CD8-positive, alpha-beta T cell (primary cell): ENCODE measurements at regions of chr11 and their contacts with region 1.

Region 1: DNA sequence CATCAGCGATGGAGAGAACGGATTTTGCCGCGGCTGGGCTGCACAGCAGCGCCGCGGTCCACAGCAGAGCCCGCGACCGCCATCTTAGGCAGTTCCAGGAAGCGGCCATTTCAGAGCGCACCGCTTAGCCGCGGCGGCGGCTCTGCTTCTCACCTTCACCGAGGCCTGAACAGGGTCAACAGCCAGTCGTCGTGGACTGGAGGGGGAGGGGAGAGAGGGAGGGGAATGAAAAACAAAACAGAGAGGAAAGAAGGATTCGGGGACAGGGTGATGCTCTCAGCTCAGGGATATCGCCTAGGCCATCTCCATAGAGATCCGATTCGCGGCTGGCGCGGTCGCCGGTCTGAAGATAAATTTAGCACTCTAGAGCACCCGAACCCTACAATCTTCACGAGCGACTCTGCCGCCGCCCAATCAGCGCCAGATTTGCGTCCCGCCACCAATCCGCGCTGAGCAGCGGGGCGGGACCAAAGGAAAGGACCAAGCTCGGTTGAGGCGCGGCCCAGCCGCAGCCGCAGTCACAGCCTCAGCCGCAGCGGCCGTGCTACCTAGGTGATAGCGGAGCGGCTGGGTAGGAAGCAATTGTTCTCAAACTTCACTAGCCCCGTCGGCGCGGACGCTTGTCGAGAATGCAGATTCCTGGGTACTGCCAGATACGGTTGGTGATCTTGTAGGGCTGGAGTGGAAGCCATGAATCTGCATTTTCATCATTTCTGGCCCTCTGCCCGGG is at the start of gene ZBED5:
- DNase-seq: peak; percentile 91 to 98 (median 94)
- ATAC-seq: peak; percentile 90
- H3K4me3 ChIP-seq: peak within 1 kb of the TSS; percentile 68 to 93
- H3K4me3 Mint-ChIP-seq: peak within 1 kb of the TSS; percentile 98
- H3K27ac ChIP-seq: peak within 1 kb of the TSS; percentile 91 to 92
- H3K27ac Mint-ChIP-seq: peak within 1 kb of the TSS; percentile 99
- H3K4me1 ChIP-seq: peaks cover 23% of the 10 kb centered on the region
- H3K4me1 Mint-ChIP-seq: peaks cover 51% of the 10 kb centered on the region
- H3K27me3 ChIP-seq: no peaks in the 10 kb centered on the region
- H3K27me3 Mint-ChIP-seq: no peaks in the 10 kb centered on the region
- CTCF ChIP-seq: no peak
- total RNA-seq, gene ZBED5: 57.5 to 59.2 TPM

Region 2: GRCh38 chr11:10236850-10237249 is 621.0 kb before region 1 on chr11:
- CTCF ChIA-PET with region 1: no interaction called
- POLR2A ChIA-PET with region 1: no interaction called
- intact Hi-C with region 1: no loop called
- DNase-seq: no peak
- ATAC-seq: no peak
- H3K4me3 ChIP-seq: no peak overlapping the region
- H3K4me3 Mint-ChIP-seq: no peak overlapping the region
- H3K27ac ChIP-seq: no peak overlapping the region
- H3K27ac Mint-ChIP-seq: no peak overlapping the region
- H3K4me1 ChIP-seq: no peaks in the 10 kb centered on the region
- H3K4me1 Mint-ChIP-seq: peaks cover 2% of the 10 kb centered on the region
- H3K27me3 ChIP-seq: no peaks in the 10 kb centered on the region
- H3K27me3 Mint-ChIP-seq: no peaks in the 10 kb centered on the region
- CTCF ChIP-seq: no peak

Region 3: DNA sequence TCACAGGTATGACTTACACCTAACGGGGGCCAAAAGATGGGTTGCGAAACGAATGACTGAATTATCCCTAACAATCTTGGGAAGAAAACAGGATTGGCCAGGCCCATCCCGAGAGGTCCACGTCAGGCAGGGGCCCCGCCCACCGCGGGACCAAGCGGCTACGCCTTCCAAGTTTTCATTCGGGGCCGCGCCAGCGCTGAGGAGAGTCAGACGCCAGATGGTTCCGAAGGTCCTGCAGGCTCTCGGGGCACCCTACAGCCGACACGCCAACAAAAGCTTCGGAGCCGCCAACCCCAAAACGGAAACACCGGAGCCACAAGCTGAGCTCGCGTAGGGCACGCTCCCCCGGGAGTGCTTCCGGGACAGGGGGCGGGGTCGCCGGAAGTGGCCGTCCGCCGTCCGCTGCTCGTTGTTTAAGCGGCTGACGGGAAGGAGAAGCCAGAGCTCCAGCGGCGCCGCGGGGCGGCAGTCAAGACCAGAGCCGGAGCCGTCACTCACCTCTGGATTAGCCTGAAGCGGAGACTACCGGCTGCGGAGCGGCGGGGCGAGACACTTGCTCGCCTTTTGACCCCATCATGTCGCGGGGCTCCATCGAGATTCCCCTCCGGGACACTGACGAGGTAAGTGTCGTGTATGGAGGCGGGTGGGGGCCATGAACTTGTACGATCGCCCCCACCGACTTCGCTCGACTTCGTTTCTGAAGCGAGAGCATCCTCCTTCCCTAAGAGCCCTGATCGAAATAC is 106.9 kb before region 1 on chr11 and contains the start of gene CTR9:
- CTCF ChIA-PET with region 1: no interaction called
- POLR2A ChIA-PET with region 1: interaction called, 11 read pairs
- intact Hi-C with region 1: loop called (anchors 1 to 5 kb)
- DNase-seq: peak; percentile 77 to 95 (median 90)
- ATAC-seq: peak; percentile 85
- H3K4me3 ChIP-seq: peak within 1 kb of the TSS; percentile 93 to 98
- H3K4me3 Mint-ChIP-seq: peak within 1 kb of the TSS; percentile 97
- H3K27ac ChIP-seq: peak within 1 kb of the TSS; percentile 66 to 81
- H3K27ac Mint-ChIP-seq: peak within 1 kb of the TSS; percentile 94
- H3K4me1 ChIP-seq: peaks cover 14% of the 10 kb centered on the region
- H3K4me1 Mint-ChIP-seq: peaks cover 33% of the 10 kb centered on the region
- H3K27me3 ChIP-seq: no peaks in the 10 kb centered on the region
- H3K27me3 Mint-ChIP-seq: no peaks in the 10 kb centered on the region
- CTCF ChIP-seq: no peak
- total RNA-seq, gene CTR9: 45.9 to 49.2 TPM

Region 4: GRCh38 chr11:10797531-10797930 is 60.3 kb before region 1 on chr11:
- CTCF ChIA-PET with region 1: interaction called, 6 read pairs
- POLR2A ChIA-PET with region 1: interaction called, 27 read pairs
- intact Hi-C with region 1: no loop called
- DNase-seq: peak in 1 of 9 experiments; percentile 26
- ATAC-seq: no peak
- H3K4me3 ChIP-seq: no peak overlapping the region
- H3K4me3 Mint-ChIP-seq: no peak overlapping the region
- H3K27ac ChIP-seq: no peak overlapping the region
- H3K27ac Mint-ChIP-seq: no peak overlapping the region
- H3K4me1 ChIP-seq: peaks cover 61% of the 10 kb centered on the region
- H3K4me1 Mint-ChIP-seq: peaks cover 77% of the 10 kb centered on the region
- H3K27me3 ChIP-seq: peaks cover 0 to 5% of the 10 kb centered on the region in 2 experiments
- H3K27me3 Mint-ChIP-seq: no peaks in the 10 kb centered on the region
- CTCF ChIP-seq: no peak

Region 5: GRCh38 chr11:10878408-10879214 is 20.7 kb after region 1 on chr11:
- CTCF ChIA-PET with region 1: interaction called, 7 read pairs
- POLR2A ChIA-PET with region 1: interaction called, 5 read pairs
- intact Hi-C with region 1: loop called (anchors 2 kb)
- DNase-seq: peak in 3 of 9 experiments; percentile 33 to 79 (median 73)
- ATAC-seq: peak; percentile 75
- H3K4me3 ChIP-seq: no peak overlapping the region
- H3K4me3 Mint-ChIP-seq: no peak overlapping the region
- H3K27ac ChIP-seq: no peak overlapping the region
- H3K27ac Mint-ChIP-seq: no peak overlapping the region
- H3K4me1 ChIP-seq: peaks cover 5% of the 10 kb centered on the region
- H3K4me1 Mint-ChIP-seq: peaks cover 18% of the 10 kb centered on the region
- H3K27me3 ChIP-seq: no peaks in the 10 kb centered on the region
- H3K27me3 Mint-ChIP-seq: no peaks in the 10 kb centered on the region
- CTCF ChIP-seq: peak; percentile 75

Region 6: GRCh38 chr11:11148104-11148509 is 290.2 kb after region 1 on chr11:
- CTCF ChIA-PET with region 1: no interaction called
- POLR2A ChIA-PET with region 1: interaction called, 4 read pairs
- intact Hi-C with region 1: loop called in 1 of 2 experiments (anchors 2 kb)
- DNase-seq: peak in 4 of 9 experiments; percentile 26 to 52 (median 38)
- ATAC-seq: no peak
- H3K4me3 ChIP-seq: no peak overlapping the region
- H3K4me3 Mint-ChIP-seq: no peak overlapping the region
- H3K27ac ChIP-seq: no peak overlapping the region
- H3K27ac Mint-ChIP-seq: peak overlapping the region; percentile 79
- H3K4me1 ChIP-seq: peaks cover 42% of the 10 kb centered on the region
- H3K4me1 Mint-ChIP-seq: peaks cover 42% of the 10 kb centered on the region
- H3K27me3 ChIP-seq: no peaks in the 10 kb centered on the region
- H3K27me3 Mint-ChIP-seq: no peaks in the 10 kb centered on the region
- CTCF ChIP-seq: no peak